Gastrocnemius medialis (tissue), 4 donors: ENCODE measurements at regions of chr13 and their contacts with region 1.

Region 1: DNA sequence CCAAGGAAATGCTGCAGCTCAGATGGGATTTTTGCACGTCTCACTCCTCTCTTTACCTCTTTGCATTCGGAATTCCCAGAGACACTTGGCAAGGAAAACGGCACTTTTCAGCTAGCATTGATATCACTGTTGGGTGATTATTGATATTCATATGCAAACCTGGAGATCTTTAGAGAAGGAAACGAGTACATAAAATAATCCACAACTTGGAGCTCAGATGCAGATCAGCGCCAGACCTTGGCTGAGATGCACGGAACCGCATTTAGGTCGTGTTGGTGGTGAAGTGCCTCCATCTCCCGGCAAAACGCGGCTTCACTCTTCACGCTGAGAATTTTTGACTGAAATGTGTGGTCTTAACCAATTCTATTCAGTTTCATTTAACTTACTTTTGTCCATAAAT is 77.2 kb upstream of the ARHGEF7 start:
- DNase-seq: no peak
- ATAC-seq: no peak
- H3K4me3 ChIP-seq: no peak overlapping the region
- H3K27ac ChIP-seq: no peak overlapping the region
- H3K4me1 ChIP-seq: no peaks in the 10 kb centered on the region
- H3K27me3 ChIP-seq: peaks cover 0 to 4% (median 0%) of the 10 kb centered on the region in 3 donors
- CTCF ChIP-seq: peak in 2 of 5 experiments; percentile 50 to 53
- POLR2A ChIP-seq: no peak

Region 2: GRCh38 chr13:110944121-110944967 is 93.6 kb before region 1 on chr13:
- in situ Hi-C with region 1: loop called in 1 of 4 experiments (anchors 10 kb)
- intact Hi-C with region 1: loop called (anchors 1 kb)
- DNase-seq: peak in 1 of 2 donors; percentile 39
- ATAC-seq: peak; percentile 82 to 86
- H3K4me3 ChIP-seq: no peak overlapping the region
- H3K27ac ChIP-seq: peak overlapping the region in 2 of 4 donors; percentile 27 to 37
- H3K4me1 ChIP-seq: peaks cover 4 to 6% of the 10 kb centered on the region in 2 donors
- H3K27me3 ChIP-seq: no peaks in the 10 kb centered on the region
- CTCF ChIP-seq: peak; percentile 36 to 81 (median 70)
- POLR2A ChIP-seq: no peak

Region 3: DNA sequence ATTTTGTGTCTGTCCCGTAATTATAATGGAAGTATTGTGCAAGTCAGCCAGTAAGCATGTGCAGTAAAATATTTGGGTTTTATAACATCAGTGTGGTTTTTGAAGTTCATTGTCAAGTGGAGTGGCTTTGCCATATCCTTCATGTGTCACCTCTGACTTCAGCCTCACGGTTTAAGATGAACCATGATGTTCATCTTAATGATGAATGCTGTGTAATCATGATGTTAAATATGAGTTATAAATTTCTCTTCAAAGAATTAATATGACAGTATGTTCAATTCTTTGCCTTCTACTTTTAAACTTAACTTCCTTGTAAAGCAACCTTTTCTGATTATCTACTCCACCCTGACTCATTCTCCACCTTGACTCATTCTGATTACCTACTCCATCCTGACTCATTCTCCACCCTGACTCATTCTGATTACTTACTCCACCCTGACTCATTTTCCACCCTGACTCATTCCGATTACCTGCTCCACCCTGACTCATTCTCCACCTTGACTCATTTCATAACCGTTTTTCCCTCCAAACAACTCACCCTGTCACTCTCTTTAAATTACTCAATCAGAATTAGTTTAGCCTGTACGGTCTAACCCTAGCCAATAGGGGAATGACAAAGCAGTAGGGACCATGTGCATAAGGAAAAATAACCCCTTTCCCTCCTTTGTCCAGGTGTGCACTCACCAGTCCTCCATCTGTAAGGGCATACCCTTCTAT is 72.7 kb before region 1 on chr13:
- in situ Hi-C with region 1: no loop called
- intact Hi-C with region 1: no loop called
- DNase-seq: no peak
- ATAC-seq: no peak
- H3K4me3 ChIP-seq: no peak overlapping the region
- H3K27ac ChIP-seq: no peak overlapping the region
- H3K4me1 ChIP-seq: no peaks in the 10 kb centered on the region
- H3K27me3 ChIP-seq: no peaks in the 10 kb centered on the region
- CTCF ChIP-seq: no peak
- POLR2A ChIP-seq: no peak

Region 4: GRCh38 chr13:111630406-111630805 is 592.5 kb after region 1 on chr13:
- in situ Hi-C with region 1: no loop called
- intact Hi-C with region 1: no loop called
- DNase-seq: no peak
- ATAC-seq: no peak
- H3K4me3 ChIP-seq: no peak overlapping the region
- H3K27ac ChIP-seq: no peak overlapping the region
- H3K4me1 ChIP-seq: no peaks in the 10 kb centered on the region
- H3K27me3 ChIP-seq: no peaks in the 10 kb centered on the region
- CTCF ChIP-seq: no peak
- POLR2A ChIP-seq: no peak